ENCODE measurements at regions of chr17 and their contacts with region 1.

Region 1: GRCh38 chr17:50094753-50095619 is at the start of gene PDK2:
- DNase-seq: peak; percentile 95
- H3K4me3 Mint-ChIP-seq: peak within 1 kb of the TSS; percentile 82
- H3K27ac Mint-ChIP-seq: peak within 1 kb of the TSS; percentile 90
- H3K4me1 Mint-ChIP-seq: peaks cover 16% of the 10 kb centered on the region
- H3K27me3 Mint-ChIP-seq: no peaks in the 10 kb centered on the region
- total RNA-seq, gene PDK2: 10.5 to 11.1 TPM

Region 2: GRCh38 chr17:49822829-49823228 is 272.2 kb before region 1 on chr17:
- CTCF ChIA-PET with region 1: no interaction called
- intact Hi-C with region 1: no loop called
- DNase-seq: no peak
- H3K4me3 Mint-ChIP-seq: no peak overlapping the region
- H3K27ac Mint-ChIP-seq: no peak overlapping the region
- H3K4me1 Mint-ChIP-seq: peaks cover 31% of the 10 kb centered on the region
- H3K27me3 Mint-ChIP-seq: no peaks in the 10 kb centered on the region

Region 3: GRCh38 chr17:50026901-50027630 is 67.9 kb before region 1 on chr17:
- CTCF ChIA-PET with region 1: interaction called, 84 read pairs
- intact Hi-C with region 1: loop called (anchors 2 kb)
- DNase-seq: peak; percentile 90
- H3K4me3 Mint-ChIP-seq: peak overlapping the region; percentile 68
- H3K27ac Mint-ChIP-seq: no peak overlapping the region
- H3K4me1 Mint-ChIP-seq: peaks cover 18% of the 10 kb centered on the region
- H3K27me3 Mint-ChIP-seq: peaks cover 25% of the 10 kb centered on the region

Region 4: GRCh38 chr17:50055426-50056230 is 39.4 kb before region 1 on chr17 and contains the start of gene ITGA3:
- CTCF ChIA-PET with region 1: interaction called, 22 read pairs
- intact Hi-C with region 1: loop called (anchors 1 kb)
- DNase-seq: peak; percentile 85
- H3K4me3 Mint-ChIP-seq: peak within 1 kb of the TSS; percentile 87
- H3K27ac Mint-ChIP-seq: peak within 1 kb of the TSS; percentile 81
- H3K4me1 Mint-ChIP-seq: peaks cover 38% of the 10 kb centered on the region
- H3K27me3 Mint-ChIP-seq: no peaks in the 10 kb centered on the region
- total RNA-seq, gene ITGA3: 17.9 to 19.3 TPM

Region 5: GRCh38 chr17:50107790-50108414 is 12.9 kb after region 1 on chr17:
- CTCF ChIA-PET with region 1: interaction called, 12 read pairs
- intact Hi-C with region 1: no loop called
- DNase-seq: no peak
- H3K4me3 Mint-ChIP-seq: no peak overlapping the region
- H3K27ac Mint-ChIP-seq: no peak overlapping the region
- H3K4me1 Mint-ChIP-seq: no peaks in the 10 kb centered on the region
- H3K27me3 Mint-ChIP-seq: no peaks in the 10 kb centered on the region

Region 6: DNA sequence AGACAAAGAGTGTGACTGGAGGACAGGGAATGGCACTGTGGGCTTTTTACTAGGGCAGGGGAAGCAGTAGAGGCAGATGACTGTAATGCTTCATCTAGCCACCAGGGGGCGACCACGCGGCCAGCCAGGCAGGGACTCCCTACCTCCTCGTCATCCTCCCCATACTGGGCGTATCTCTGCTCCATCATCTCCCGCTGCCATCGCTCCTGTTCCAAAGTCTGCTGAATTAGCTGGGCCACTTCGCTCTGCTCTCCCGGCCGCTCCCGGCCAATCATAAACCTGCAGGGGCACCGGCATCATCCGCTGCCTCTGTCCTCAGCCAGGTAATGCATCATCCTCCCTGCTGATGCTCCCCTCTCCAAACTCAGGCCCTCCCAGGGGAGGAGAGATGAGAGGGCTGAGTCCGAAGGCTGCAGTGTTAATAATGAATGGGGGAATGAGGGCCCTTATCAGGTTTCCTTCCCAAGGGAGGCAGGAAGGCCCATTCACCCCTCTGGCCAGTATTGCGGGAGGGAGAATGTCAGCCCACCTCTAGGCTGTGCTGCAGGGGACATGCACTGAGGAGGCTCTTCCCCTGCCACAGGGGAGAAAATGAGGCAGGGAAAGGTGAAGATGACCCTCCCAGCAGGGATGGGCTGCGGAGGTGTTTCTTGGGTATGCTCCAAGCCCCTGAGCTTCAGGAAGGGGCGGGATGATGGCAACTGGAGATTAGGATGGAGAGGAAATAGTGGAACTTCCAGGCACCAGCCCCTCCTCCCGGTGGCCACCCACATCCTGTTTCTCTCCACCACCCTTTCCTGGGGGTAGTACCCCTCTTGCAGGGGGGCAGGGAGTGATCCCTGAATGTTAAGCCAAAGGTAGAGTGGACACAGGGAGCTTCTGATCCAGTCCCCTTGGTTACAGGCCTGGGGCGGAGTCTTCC is 45.2 kb after region 1 on chr17:
- CTCF ChIA-PET with region 1: interaction called, 10 read pairs
- intact Hi-C with region 1: no loop called
- DNase-seq: peak; percentile 91
- H3K4me3 Mint-ChIP-seq: peak overlapping the region; percentile 44
- H3K27ac Mint-ChIP-seq: peak overlapping the region; percentile 78
- H3K4me1 Mint-ChIP-seq: peaks cover 49% of the 10 kb centered on the region
- H3K27me3 Mint-ChIP-seq: no peaks in the 10 kb centered on the region

Region 7: DNA sequence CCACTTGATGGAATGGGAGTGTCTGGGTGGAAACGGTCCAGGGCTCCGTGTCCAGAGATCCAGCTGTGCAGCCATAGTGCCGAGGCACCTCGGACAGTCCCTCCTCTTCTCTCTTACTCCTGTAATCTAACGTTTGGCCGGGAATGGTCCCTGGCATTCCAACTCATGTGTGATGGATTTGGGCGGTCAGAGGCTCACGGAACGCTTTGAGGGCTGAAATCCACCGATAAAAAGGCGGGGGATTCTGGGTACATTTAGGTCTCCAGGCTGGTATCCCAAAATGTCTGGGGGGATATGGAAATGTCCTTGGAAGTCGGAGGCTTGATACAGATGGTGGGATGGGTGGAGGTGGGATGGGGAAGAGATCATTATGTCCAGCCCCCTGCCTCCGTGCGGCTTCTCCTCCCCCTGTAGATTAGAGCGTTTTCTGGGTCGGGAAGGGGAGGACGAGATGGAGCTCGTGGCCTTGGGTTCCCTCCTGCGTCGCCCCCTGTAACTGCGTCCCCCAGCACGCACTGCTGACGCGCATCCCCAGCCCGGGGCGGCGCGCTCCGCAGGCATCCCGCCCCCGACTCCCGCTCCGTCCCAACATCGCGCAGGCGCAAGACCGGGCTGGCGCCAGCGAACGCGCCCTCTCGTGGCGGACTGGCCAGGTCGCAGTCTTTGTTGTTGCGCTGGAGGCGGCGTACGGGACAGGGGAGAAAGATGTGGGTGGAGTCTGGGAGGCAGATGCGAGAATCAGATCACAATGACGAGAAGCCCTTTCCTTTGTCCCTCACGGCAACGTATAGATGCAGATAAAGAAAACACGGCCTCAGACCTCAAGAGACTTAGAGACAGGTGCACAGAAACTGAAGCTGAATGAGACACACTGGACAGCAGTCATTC is 66.3 kb after region 1 on chr17:
- CTCF ChIA-PET with region 1: interaction called, 26 read pairs
- intact Hi-C with region 1: loop called (anchors 1 kb)
- DNase-seq: peak; percentile 97
- H3K4me3 Mint-ChIP-seq: peak overlapping the region; percentile 64
- H3K27ac Mint-ChIP-seq: peak overlapping the region; percentile 96
- H3K4me1 Mint-ChIP-seq: peaks cover 35% of the 10 kb centered on the region
- H3K27me3 Mint-ChIP-seq: no peaks in the 10 kb centered on the region

Region 8: DNA sequence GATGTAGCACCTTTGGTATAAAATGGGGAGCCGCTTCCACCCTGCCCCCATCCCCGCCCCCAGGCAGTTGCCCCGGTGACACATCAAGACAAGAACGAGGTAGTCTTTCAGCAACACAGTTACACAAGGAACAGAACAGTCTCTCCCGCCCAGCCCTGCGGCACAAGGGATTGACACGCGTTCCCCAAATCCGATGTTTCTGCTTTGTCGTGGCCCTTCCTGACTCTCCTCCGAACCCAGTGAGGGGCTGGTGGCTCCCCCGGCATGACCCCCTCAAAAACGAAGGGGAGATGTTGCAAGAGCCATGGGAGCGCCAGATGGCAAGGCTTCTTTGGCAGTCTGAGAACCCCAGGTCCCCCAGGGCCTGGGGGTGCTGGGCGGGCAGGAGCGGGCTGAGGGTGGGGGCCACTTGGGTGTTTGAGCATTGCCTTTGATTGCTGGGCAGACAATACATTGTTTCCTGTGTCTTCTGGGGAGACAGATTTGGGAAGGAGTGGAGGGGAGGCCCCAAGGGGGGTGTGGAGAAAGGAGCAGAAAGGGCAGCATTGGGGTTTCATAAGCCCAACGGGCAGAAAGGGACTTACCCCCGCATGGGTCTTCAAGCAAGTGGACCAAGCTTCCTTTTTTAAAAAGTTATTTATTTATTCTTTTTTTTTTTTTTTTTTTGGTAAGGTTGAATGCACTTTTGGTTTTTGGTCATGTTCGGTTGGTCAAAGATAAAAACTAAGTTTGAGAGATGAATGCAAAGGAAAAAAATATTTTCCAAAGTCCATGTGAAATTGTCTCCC is 89.8 kb after region 1 on chr17:
- CTCF ChIA-PET with region 1: no interaction called
- intact Hi-C with region 1: no loop called
- DNase-seq: no peak
- H3K4me3 Mint-ChIP-seq: no peak overlapping the region
- H3K27ac Mint-ChIP-seq: no peak overlapping the region
- H3K4me1 Mint-ChIP-seq: peaks cover 16% of the 10 kb centered on the region
- H3K27me3 Mint-ChIP-seq: no peaks in the 10 kb centered on the region

Region 9: DNA sequence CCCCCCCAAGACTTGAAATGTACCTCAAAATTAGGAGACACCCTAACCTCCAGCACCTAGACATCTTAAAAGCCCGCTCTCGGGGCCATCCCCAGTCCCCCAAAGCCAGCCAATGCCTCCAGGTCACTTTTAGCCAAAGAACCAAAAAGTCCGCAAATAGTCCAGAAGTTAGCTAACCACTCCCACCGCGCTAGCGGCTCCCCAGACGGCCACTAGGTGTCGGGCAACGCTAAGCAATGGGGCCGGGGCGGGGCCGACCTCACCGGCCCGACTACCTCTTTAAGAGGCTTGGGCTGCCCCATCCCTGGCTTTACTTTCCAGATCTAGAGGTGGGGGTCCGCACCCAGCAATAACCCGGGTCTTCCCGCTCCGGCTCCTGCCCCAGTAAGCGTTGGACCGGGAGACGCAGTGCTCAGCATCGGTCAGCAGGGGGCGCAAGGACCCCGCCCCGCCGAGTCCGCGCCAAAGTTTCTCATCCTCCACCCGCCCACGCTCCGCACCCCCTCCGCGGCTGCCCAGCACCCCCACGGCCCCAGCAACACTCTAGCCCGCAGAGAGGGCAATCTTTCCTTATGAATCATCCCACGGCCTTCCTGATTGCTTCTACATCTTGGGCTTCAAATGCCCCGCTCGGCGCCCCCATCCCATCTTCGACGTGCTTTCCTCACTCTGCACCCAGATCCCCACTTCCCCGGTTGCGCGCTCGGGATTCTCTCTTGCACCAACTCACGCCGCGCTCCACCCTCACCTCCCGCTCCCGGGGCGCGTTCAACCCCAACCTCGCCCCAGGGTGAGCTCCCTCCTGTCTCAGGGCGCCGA is 105.7 kb after region 1 on chr17:
- CTCF ChIA-PET with region 1: interaction called, 7 read pairs
- intact Hi-C with region 1: loop called (anchors 1 kb)
- DNase-seq: peak; percentile 88
- H3K4me3 Mint-ChIP-seq: peak overlapping the region; percentile 56
- H3K27ac Mint-ChIP-seq: no peak overlapping the region
- H3K4me1 Mint-ChIP-seq: peaks cover 17% of the 10 kb centered on the region
- H3K27me3 Mint-ChIP-seq: peaks cover 35% of the 10 kb centered on the region